Activated CD4-positive, alpha-beta memory T cell treated with anti-CD3 and anti-CD28 coated beads for 36 hours (primary cell): ENCODE measurements at regions of chr22 and their contacts with region 1.

Region 1: GRCh38 chr22:41910050-41911000 is 4.5 kb downstream of the SHISA8 start:
- DNase-seq: peak; percentile 40
- H3K4me3 Mint-ChIP-seq: no peak overlapping the region
- H3K27ac Mint-ChIP-seq: no peak overlapping the region
- H3K4me1 Mint-ChIP-seq: peaks cover 33% of the 10 kb centered on the region
- H3K27me3 Mint-ChIP-seq: peaks cover 30% of the 10 kb centered on the region

Region 2: GRCh38 chr22:41822317-41823060 is 87.8 kb before region 1 on chr22:
- CTCF ChIA-PET with region 1: no interaction called
- POLR2A ChIA-PET with region 1: no interaction called
- intact Hi-C with region 1: no loop called
- DNase-seq: peak; percentile 46
- H3K4me3 Mint-ChIP-seq: no peak overlapping the region
- H3K27ac Mint-ChIP-seq: peak overlapping the region; percentile 82
- H3K4me1 Mint-ChIP-seq: peaks cover 39% of the 10 kb centered on the region
- H3K27me3 Mint-ChIP-seq: no peaks in the 10 kb centered on the region

Region 3: GRCh38 chr22:41925655-41926460 is 15.5 kb after region 1 on chr22:
- CTCF ChIA-PET with region 1: interaction called, 25 read pairs
- POLR2A ChIA-PET with region 1: interaction called, 10 read pairs
- intact Hi-C with region 1: no loop called
- DNase-seq: peak; percentile 86
- H3K4me3 Mint-ChIP-seq: peak overlapping the region; percentile 71
- H3K27ac Mint-ChIP-seq: no peak overlapping the region
- H3K4me1 Mint-ChIP-seq: peaks cover 31% of the 10 kb centered on the region
- H3K27me3 Mint-ChIP-seq: peaks cover 6% of the 10 kb centered on the region